Pancreas (tissue), 10 donors: ENCODE measurements at regions of chr11 and their contacts with region 1.

Region 1: DNA sequence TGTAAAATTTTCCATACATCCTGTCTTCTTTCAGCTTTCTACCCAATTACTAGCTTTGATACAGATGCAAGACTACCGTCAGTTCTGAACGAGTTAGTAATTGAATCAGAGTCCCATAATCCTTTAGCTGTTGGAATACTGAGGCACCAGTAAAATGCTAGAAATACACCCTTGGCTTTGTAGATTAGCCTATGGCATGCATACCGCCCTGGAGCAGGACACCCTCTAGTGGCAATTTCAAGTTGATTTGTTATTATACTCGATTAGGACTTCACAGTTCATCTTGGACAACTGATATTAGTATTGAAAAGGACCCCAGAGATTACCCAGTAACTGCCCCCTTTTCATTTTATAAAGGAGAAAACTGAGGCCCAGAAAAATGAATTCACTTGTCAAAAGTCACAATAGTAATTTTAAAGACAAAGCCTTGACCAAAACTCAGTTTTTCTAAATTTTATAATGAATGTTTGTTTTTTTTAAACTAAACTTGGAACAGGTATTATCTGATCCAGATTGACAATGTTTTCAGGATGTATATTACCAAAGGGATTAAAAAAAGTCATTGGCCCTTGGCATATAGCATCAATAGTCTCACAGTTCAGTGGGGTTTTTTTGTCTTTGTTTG is 72.6 kb downstream of the HIPK3 start:
- DNase-seq: peak in 2 of 6 donors; percentile 16 to 57
- ATAC-seq: peak; percentile 75 to 95 (median 92)
- H3K4me3 ChIP-seq: no peak overlapping the region
- H3K27ac ChIP-seq: no peak overlapping the region
- H3K4me1 ChIP-seq: no peaks in the 10 kb centered on the region
- H3K27me3 ChIP-seq: no peaks in the 10 kb centered on the region
- CTCF ChIP-seq: peak in 3 of 4 donors; percentile 6 to 45 (median 37)

Region 2: DNA sequence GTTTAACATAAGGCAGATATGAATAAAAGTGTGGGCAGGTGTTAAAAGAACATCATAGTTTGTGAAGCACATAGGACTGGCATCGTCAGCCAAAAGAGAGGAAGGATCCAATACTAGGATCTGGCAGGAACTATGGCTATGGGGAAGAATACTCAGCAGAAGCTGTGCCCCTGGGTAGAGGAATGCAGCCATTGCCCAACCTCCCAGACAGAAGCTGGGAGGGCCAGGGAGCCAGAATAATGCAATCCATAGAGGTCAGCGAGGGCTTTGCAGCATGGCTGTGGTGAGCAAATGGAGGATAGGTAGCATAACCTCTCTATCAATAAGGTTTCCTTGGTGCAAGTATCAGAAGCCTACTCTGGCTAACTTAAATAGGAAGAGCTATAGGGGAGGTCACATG is 156.8 kb before region 1 on chr11:
- intact Hi-C with region 1: loop called in 2 of 3 experiments (anchors 5 to 10 kb)
- DNase-seq: no peak
- ATAC-seq: no peak
- H3K4me3 ChIP-seq: no peak overlapping the region
- H3K27ac ChIP-seq: no peak overlapping the region
- H3K4me1 ChIP-seq: no peaks in the 10 kb centered on the region
- H3K27me3 ChIP-seq: no peaks in the 10 kb centered on the region
- CTCF ChIP-seq: no peak